Activated naive CD4-positive, alpha-beta T cell treated with anti-CD3 and anti-CD28 coated beads for 36 hours (primary cell): ENCODE measurements at regions of chr15 and their contacts with region 1.

Region 1: GRCh38 chr15:43440721-43441281 is 52.2 kb downstream of the TP53BP1 start:
- DNase-seq: peak; percentile 68
- H3K4me3 Mint-ChIP-seq: no peak overlapping the region
- H3K27ac Mint-ChIP-seq: peak overlapping the region; percentile 86
- H3K4me1 Mint-ChIP-seq: peaks cover 7% of the 10 kb centered on the region
- H3K27me3 Mint-ChIP-seq: no peaks in the 10 kb centered on the region

Region 2: DNA sequence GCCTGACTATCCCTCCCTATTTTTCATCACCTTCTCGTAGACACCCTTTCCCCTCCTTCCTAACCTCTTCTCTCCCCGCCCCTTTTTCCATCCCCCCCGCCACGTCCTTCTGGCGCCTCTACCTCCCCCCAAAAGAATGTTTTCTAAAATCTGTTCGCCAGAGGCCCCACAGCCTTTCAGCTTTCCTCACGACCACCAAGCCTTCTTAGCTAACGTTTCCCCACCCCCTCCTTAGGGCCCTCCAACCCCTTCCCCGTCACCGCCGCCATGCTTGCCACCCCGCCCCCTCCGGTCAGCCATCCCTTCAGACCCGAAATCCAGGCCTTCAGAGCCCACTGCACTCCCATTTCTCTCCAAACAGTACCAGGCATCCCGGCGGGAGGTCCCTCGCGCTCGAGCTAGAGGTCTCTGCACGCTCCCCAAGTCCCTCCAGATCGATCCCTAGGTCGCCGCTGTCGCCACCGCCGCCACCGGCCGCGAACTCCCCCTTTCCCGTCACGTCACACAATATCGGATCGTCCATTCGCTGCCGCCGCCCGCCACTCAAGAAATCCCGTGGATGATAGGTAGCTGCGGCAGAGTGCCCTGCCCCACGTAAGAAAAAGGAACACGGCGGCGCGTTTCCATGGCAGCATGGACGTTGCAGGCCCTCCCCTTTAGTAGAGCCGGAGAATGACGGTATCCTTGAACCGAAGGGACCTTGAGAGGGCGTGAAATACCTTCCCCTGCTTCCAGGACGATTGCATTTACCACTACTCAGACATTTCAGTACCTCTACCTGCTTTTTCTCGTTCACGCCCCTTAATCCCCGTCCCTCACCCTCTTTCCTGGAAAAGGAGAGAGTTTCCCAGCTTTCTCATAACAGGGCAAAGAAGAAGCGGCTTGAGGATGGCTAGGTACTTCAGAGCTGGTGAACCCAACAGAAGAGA is 52.1 kb after region 1 on chr15 and contains the start of gene TP53BP1:
- CTCF ChIA-PET with region 1: no interaction called
- intact Hi-C with region 1: loop called (anchors 1 kb)
- DNase-seq: peak; percentile 97
- H3K4me3 Mint-ChIP-seq: peak within 1 kb of the TSS; percentile 96
- H3K27ac Mint-ChIP-seq: peak within 1 kb of the TSS; percentile 92
- H3K4me1 Mint-ChIP-seq: peaks cover 27% of the 10 kb centered on the region
- H3K27me3 Mint-ChIP-seq: no peaks in the 10 kb centered on the region
- total RNA-seq, gene TP53BP1: 18.9 to 22.3 TPM